ENCODE measurements at regions of chr14 and their contacts with region 1.

Region 1: DNA sequence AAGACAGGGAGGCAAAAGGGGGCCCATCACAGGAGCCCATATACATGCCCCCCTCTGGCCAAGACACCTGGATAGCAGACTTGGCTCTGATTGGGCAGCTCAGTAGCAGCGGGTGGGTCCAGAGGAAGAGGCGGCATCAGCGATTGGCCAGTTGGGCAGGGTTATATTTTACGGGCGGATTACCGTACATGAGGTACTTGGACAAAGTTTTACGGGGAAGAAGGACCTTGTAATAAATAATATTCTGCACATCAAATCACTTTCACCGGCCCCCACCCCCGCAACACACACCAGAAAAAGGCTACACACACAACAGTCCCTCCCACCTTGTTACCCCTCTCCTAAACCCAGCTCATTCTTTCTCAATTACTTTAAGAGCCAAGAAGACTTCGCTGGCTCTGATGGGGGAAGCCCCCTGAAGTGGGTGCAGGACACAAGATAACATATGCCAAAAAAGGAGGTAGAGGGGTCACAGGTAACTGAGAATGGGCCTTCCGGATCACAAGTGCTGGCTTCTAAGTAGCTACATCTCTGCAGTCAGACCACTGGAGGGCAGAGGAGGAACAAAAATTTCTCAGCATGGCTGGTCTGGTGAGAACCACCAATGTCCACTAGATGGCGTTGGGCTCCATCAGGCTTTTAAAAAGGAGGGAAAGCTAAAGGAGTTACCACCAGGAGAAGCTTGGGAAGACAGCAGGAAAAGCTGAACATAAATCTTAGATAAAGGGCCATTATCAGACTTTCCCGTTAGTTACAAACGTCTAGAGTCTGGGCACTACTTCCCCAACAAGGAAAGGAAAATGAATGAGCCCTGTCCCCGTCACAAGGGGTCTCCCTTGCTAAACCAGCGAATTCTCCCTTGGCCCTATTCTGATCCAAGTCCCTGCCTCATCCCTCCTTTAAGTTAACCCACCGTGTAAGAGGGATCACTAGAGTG is 11.4 kb upstream of the CDH24 start:
- DNase-seq: peak; percentile 80
- H3K4me3 ChIP-seq: peak overlapping the region; percentile 49
- H3K27ac ChIP-seq: no peak overlapping the region
- H3K27me3 ChIP-seq: no peaks in the 10 kb centered on the region
- CTCF ChIP-seq: peak; percentile 100

Region 2: GRCh38 chr14:22657861-22658260 is 410.9 kb before region 1 on chr14:
- CTCF ChIA-PET with region 1: no interaction called
- POLR2A ChIA-PET with region 1: no interaction called
- DNase-seq: no peak
- H3K4me3 ChIP-seq: no peak overlapping the region
- H3K27ac ChIP-seq: no peak overlapping the region
- H3K27me3 ChIP-seq: peaks cover 3% of the 10 kb centered on the region
- CTCF ChIP-seq: peak; percentile 36; the same call in 1 of the 2 replicates

Region 3: DNA sequence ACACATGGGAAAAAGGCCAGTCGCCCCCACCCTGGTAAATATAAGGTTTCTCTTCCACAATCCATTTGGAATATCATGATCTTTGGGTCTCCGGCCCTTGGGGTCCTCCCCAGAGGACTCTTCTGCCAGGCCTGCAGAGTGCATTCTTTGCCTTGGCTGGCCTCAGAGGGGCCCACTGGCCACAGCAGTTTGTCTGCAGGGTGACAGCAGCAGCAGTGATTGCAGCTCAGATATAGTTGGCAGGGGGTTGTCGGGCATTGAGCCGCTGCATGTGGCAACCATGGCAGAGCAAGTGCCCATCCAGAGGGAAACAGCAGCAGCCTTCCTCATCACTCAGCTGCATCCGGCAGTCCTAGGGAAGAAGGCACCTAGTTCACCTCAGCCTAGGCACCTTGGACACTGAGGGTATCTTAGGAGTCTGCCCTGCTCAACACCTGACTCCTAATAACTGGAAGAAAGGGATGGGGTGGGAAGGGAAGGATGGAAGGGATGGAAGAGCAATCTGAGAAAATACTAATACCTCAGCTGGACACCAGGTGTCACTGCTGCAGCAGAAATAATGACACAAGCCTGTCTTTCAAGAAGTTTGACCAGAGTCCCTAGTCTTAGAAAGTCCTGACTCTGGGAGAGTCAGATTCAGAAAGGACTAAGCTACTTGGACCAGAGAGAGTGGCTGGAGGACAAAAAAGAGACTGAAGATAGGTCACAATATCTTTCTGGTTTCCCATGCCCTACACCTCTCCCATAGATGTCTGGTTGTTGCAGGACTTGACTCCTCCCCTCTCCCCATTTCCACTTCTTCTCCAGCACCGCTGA is 95.3 kb before region 1 on chr14:
- CTCF ChIA-PET with region 1: interaction called, 24 read pairs
- POLR2A ChIA-PET with region 1: no interaction called
- DNase-seq: no peak
- H3K4me3 ChIP-seq: no peak overlapping the region
- H3K27ac ChIP-seq: no peak overlapping the region
- H3K27me3 ChIP-seq: no peaks in the 10 kb centered on the region
- CTCF ChIP-seq: peak; percentile 68

Region 4: GRCh38 chr14:23006544-23007419 is 62.0 kb before region 1 on chr14:
- CTCF ChIA-PET with region 1: interaction called, 24 read pairs
- POLR2A ChIA-PET with region 1: no interaction called
- DNase-seq: peak; percentile 95
- H3K4me3 ChIP-seq: peak overlapping the region; percentile 80
- H3K27ac ChIP-seq: peak overlapping the region; percentile 92
- H3K27me3 ChIP-seq: no peaks in the 10 kb centered on the region
- CTCF ChIP-seq: peak; percentile 40

Region 5: DNA sequence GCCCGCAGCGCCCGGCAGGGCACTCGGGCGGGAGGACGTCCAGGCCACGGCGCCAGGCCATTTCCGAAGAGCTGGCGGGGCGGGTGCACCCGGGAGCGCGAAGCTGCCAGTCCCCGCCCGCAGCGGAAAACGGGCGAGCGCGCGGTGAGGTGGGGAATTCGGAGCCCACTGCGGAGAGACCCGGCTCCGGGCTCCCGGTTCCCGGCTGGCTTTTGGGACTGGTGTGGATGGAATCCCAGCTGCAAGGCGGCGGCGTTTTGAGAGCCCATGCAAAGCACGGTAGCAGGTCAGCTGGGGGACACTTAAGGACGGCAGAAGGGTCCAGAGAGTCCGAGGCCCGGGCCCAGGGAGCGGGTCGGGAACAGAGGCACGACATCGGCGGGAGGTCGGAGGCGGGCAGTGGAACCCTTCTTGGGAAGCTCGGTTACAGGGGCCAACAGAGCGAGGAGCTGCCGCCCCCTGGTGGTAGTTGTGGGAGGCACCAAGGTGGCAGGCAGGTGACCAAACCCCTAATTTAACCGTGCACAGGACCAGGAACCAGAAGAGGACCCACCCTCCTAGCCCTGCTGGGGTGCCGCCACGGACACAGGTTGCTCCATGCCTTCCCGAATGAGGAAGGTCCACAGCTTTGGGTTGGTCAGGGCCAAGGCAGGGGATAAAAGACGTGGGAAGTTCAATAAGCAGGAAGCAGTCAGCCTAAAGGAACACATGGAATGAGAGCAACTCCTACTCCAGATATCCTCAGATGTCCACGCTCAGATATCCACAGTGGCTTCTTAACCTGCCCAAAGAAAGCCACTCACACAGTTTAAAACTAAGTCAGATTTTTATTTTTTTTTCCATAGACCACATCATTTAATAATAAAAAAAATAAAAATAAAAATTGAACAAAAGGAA is 10.7 kb before region 1 on chr14:
- CTCF ChIA-PET with region 1: interaction called, 59 read pairs
- POLR2A ChIA-PET with region 1: interaction called, 17 read pairs
- DNase-seq: peak; percentile 45
- H3K4me3 ChIP-seq: peak overlapping the region; percentile 61
- H3K27ac ChIP-seq: peak overlapping the region; percentile 52
- H3K27me3 ChIP-seq: no peaks in the 10 kb centered on the region
- CTCF ChIP-seq: peak; percentile 96

Region 6: GRCh38 chr14:23114669-23115491 is 46.1 kb after region 1 on chr14:
- CTCF ChIA-PET with region 1: interaction called, 152 read pairs
- POLR2A ChIA-PET with region 1: no interaction called
- DNase-seq: peak; percentile 89
- H3K4me3 ChIP-seq: peak overlapping the region; percentile 17; the same call in 1 of the 2 replicates
- H3K27ac ChIP-seq: peak overlapping the region; percentile 91
- H3K27me3 ChIP-seq: no peaks in the 10 kb centered on the region
- CTCF ChIP-seq: peak; percentile 16

Region 7: GRCh38 chr14:23137830-23138535 is 69.2 kb after region 1 on chr14:
- CTCF ChIA-PET with region 1: no interaction called
- POLR2A ChIA-PET with region 1: no interaction called
- DNase-seq: no peak
- H3K4me3 ChIP-seq: no peak overlapping the region
- H3K27ac ChIP-seq: no peak overlapping the region
- H3K27me3 ChIP-seq: peaks cover 24% of the 10 kb centered on the region
- CTCF ChIP-seq: no peak

Region 8: DNA sequence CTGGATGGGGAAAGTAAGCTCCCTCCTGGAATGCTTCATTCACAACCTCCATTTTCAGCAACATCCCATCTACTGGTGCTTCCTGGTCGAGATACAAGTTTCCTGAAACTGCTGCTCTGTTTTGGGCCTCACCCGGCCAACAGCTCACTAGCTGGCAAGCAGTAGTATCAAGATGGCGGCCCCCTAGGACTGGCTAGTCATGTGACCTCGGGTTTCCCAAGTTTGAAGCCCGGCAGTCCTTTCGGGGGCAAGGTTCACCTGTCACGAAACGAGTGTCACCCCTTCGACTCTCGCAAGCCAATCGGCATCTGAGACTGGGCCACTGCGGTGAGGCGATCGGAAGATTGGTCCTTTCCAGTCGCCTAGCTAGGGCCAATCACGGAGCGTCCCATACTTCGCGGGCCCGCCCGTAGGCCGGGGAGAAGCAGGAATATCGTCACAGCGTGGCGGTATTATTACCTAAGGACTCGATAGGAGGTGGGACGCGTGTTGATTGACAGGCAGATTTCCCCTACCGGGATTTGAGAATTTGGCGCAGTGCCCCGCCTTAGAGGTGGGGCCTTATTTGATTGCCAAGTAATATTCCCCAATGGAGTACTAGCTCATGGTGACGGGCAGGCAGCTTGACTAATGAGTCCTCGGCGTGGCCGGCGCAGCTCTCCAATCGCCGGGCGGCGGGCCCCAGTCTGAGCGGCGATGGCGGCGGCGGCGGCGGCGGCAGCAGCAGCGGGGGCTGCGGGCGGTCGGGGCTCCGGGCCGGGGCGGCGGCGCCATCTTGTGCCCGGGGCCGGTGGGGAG is 252.2 kb after region 1 on chr14 and contains the start of gene PABPN1:
- CTCF ChIA-PET with region 1: interaction called, 12 read pairs
- POLR2A ChIA-PET with region 1: no interaction called
- DNase-seq: peak; percentile 99
- H3K4me3 ChIP-seq: peak within 1 kb of the TSS; percentile 78
- H3K27ac ChIP-seq: peak within 1 kb of the TSS; percentile 93
- H3K27me3 ChIP-seq: no peaks in the 10 kb centered on the region
- CTCF ChIP-seq: no peak
- polyA plus RNA-seq, gene PABPN1: 174 and 182 TPM in 2 replicates